ENCODE measurements at regions of chr5 and their contacts with region 1.

Region 1: DNA sequence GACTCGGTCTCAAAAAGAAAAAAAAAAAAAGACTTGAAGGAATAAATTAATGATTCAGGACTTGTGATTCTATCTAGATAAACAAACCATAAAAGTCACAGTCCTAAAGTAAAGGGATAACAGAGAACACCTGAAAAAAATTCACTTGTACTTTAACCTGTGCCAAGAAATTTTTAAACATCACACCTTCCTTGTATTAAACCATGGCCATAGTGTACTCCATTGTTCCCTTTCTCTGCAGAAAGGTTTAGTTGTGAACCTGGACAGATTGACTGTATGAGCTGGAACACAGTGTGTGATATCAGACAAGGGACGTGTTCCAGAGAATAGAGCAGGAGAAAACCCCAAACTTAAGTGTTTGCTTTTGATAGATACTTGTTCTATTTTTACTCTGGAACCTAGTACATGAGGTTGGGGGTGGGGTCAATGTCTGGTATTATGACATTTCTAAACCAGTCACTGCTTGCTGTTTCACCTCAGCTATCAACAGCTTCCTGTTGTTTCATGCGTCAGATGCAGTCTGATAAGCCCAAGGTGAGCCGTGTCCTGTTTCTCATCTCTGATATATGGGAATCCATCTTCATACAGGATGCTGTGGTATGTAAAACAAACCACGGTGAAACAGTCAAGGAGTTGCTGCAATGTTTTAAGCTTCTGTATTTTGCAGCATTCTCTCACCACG is 62.5 kb upstream of the ITGA1 start:
- DNase-seq: no peak
- ATAC-seq: no peak

Region 2: GRCh38 chr5:52771343-52772039 is 46.3 kb after region 1 on chr5:
- intact Hi-C with region 1: loop called (anchors 5 kb)
- DNase-seq: no peak
- ATAC-seq: no peak

Measured in Right ventricle myocardium inferior (tissue), 1 donor.